Endothelial cell of umbilical vein (primary cell): ENCODE measurements at regions of chr6 and their contacts with region 1.

Region 1: DNA sequence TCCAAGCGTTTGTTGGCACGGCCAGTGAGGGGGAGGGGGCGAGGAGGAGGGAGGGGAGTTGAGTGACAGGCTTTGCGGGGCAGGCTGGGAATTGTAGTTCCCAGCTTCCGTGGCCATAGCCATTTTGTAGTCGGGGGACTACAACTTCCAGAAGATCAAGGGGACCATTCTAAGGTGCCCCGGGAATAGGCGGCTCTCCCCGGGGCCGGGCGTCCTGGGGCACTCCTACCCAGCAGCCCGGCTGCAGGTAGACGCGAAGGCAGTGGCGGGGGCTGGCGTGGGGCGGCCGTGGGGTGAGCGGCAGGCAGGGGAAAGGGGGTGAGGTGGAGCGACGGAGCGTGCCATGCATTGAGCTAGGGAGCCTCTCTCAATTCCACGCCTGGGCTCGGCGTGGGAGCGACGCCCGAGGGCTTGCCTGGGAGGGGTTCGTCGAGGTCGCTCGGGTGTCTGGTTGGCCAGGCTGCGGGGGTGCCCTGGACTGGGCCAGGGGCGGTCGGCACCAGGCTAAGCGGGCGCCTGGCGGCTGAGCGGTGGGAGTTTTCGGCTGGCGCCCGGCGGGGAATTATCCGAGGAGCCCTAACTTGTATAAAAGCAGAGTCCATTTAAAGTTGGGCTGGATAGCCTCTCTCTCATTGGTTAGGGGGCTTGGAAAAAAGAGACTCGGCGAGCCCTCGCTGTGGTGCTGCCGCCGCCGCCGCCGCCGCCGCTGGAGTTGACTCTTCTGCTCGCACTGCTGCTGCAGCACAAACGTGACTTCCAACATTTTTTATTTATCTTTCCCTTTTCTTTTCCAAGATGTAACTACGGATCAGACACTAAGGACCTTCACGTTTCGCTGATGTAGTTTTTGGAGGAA is at the start of gene JARID2:
- DNase-seq: peak; percentile 97
- H3K4me3 ChIP-seq: peak within 1 kb of the TSS; percentile 63 to 96 (median 94)
- H3K27ac ChIP-seq: peak within 1 kb of the TSS; percentile 70
- H3K4me1 ChIP-seq: peaks cover 30% of the 10 kb centered on the region
- H3K27me3 ChIP-seq: no peaks in the 10 kb centered on the region
- CTCF ChIP-seq: no peak
- POLR2A ChIP-seq: peak; percentile 34
- total RNA-seq, gene JARID2: 8.8 and 10.6 TPM in 2 replicates

Region 2: DNA sequence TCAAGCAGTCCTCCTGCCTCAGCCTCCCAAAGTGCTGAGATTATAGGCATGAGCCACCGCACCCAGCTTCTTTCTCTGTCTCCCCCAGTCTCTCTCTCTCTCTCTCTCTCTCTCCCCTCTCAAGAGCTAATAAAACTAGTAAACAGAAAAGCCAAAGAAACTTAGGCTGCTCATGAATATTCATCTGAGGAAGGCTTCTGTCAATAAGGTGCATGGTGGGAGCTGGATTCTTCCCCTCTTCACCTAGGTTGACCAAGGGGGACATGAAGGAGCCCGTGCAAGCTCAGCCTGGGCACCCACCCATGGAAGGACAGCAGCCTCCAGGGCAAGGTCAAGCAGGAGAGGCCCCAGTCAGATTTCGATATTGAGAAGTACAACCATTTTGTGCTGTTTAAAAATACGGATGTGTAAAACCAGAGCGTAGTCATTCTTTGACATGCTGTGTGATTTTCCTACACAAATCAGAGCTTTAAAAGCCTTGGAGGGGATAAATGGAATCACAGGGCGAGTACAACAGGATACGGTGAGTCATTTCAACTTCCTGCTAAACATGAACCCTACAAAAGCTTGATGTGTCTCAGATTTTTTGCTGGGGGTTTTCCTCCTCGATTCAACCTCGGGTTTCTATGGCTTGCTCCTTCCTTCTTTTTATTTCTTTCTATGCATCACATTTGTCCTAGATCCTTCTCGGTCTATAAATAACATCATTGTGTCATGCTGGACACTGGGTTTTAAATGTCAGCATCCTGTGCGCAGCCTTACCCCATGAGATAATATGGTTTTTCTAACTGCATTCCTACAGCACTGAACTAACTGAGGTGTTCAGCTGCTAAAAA is 368.6 kb before region 1 on chr6:
- CTCF ChIA-PET with region 1: no interaction called
- POLR2A ChIA-PET with region 1: no interaction called
- dilution Hi-C with region 1: no loop called
- intact Hi-C with region 1: loop called (anchors 1 kb)
- DNase-seq: peak; percentile 88
- H3K4me3 ChIP-seq: no peak overlapping the region
- H3K27ac ChIP-seq: peak overlapping the region; percentile 49
- H3K4me1 ChIP-seq: peaks cover 37% of the 10 kb centered on the region
- H3K27me3 ChIP-seq: peaks cover 0 to 3% of the 10 kb centered on the region in 2 experiments
- CTCF ChIP-seq: no peak
- POLR2A ChIP-seq: no peak

Region 3: DNA sequence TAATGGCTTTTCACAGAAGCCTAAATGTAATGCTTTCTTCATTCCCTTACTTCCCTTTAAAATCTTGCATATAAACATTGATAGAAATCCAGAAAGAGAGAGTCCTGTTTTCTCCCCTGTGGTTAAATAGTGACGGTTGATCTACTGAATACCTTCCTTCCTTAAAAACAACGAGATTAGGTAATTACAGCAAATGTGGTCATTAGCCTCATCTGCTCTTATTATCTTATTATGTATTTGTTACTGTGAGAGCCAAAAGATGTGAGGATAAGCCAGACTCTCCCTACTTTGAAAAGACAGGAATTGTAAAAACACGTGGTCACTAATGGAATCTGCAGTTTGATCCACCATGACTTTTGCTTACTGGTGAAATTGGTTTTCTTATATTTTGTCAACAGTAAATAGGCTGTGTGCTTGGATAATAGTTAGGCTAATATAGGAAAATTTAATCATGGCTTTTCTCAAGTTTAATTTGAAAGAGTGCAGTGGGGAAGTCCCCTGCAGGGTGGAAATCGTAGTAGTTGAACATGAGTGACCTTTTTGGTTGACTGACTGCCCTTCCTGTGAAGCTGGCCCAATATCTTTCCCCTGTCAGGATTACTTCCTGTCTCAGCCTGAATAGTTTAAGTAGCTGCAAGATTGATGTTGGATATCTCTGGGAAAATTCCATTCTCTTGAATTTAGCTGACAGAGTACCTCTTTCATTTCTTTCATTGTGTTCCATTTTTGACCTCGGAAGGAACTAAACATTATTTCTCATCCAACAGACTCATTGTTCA is 63.0 kb after region 1 on chr6:
- CTCF ChIA-PET with region 1: no interaction called
- POLR2A ChIA-PET with region 1: no interaction called
- dilution Hi-C with region 1: no loop called
- intact Hi-C with region 1: loop called (anchors 2 kb)
- DNase-seq: peak; percentile 64
- H3K4me3 ChIP-seq: peak overlapping the region in 1 of 3 experiments; percentile 21
- H3K27ac ChIP-seq: peak overlapping the region; percentile 11
- H3K4me1 ChIP-seq: peaks cover 38% of the 10 kb centered on the region
- H3K27me3 ChIP-seq: no peaks in the 10 kb centered on the region
- CTCF ChIP-seq: no peak
- POLR2A ChIP-seq: no peak

Region 4: DNA sequence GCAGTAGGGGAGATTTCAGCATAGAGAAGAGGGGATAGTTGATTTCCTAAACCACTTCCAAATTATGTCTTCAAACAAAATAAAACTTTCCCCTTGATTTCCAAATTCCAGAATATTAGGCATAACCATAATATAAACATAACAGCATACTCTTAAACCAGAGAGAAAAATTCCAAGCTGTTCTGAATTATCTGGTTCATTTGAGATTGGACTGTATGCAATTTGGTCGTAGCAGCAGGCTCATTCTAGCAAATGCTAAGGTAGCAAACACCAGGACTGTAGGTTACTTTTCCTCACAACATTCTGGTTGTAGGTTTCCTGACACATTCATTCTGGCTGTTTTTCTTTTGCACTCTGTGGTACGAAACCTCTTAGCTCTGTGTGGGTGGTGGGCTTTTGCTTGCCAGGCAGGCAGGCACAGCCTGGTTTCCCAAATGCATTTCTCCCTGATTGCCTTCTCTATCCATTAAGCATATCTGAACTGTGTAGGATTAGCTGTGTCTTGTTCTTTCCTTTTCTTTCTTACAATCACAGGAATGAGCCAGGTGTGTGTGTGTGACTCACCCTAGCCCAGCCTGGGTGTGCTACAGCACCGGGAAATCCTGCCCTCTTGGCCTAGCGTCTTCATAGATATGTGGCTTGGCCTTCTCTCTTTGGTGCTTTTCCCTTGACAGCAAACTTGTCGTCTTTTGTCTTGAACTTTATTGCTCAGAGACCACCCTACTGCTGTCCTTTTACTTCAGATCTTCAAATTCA is 77.4 kb after region 1 on chr6:
- CTCF ChIA-PET with region 1: no interaction called
- POLR2A ChIA-PET with region 1: no interaction called
- dilution Hi-C with region 1: no loop called
- intact Hi-C with region 1: no loop called
- DNase-seq: no peak
- H3K4me3 ChIP-seq: no peak overlapping the region
- H3K27ac ChIP-seq: no peak overlapping the region
- H3K4me1 ChIP-seq: peaks cover 4% of the 10 kb centered on the region
- H3K27me3 ChIP-seq: no peaks in the 10 kb centered on the region
- CTCF ChIP-seq: no peak
- POLR2A ChIP-seq: no peak

Region 5: GRCh38 chr6:15491255-15491985 is 245.8 kb after region 1 on chr6:
- CTCF ChIA-PET with region 1: no interaction called
- POLR2A ChIA-PET with region 1: no interaction called
- dilution Hi-C with region 1: no loop called
- intact Hi-C with region 1: loop called (anchors 1 kb)
- DNase-seq: peak; percentile 54
- H3K4me3 ChIP-seq: no peak overlapping the region
- H3K27ac ChIP-seq: no peak overlapping the region
- H3K4me1 ChIP-seq: no peaks in the 10 kb centered on the region
- H3K27me3 ChIP-seq: no peaks in the 10 kb centered on the region
- CTCF ChIP-seq: peak; percentile 84 to 90
- POLR2A ChIP-seq: no peak

Region 6: GRCh38 chr6:15662326-15663129 is 416.9 kb after region 1 on chr6 and contains the start of gene DTNBP1:
- CTCF ChIA-PET with region 1: no interaction called
- POLR2A ChIA-PET with region 1: no interaction called
- dilution Hi-C with region 1: no loop called
- intact Hi-C with region 1: loop called (anchors 1 kb)
- DNase-seq: peak; percentile 79
- H3K4me3 ChIP-seq: peak within 1 kb of the TSS; percentile 62 to 78 (median 71)
- H3K27ac ChIP-seq: peak within 1 kb of the TSS; percentile 3
- H3K4me1 ChIP-seq: peaks cover 6% of the 10 kb centered on the region
- H3K27me3 ChIP-seq: peaks cover 3 to 7% of the 10 kb centered on the region in 2 experiments
- CTCF ChIP-seq: no peak
- POLR2A ChIP-seq: peak; percentile 42
- total RNA-seq, gene DTNBP1: 21.8 and 24.3 TPM in 2 replicates